Naive thymus-derived CD4-positive, alpha-beta T cell (primary cell): ENCODE measurements at regions of chr3 and their contacts with region 1.

Region 1: DNA sequence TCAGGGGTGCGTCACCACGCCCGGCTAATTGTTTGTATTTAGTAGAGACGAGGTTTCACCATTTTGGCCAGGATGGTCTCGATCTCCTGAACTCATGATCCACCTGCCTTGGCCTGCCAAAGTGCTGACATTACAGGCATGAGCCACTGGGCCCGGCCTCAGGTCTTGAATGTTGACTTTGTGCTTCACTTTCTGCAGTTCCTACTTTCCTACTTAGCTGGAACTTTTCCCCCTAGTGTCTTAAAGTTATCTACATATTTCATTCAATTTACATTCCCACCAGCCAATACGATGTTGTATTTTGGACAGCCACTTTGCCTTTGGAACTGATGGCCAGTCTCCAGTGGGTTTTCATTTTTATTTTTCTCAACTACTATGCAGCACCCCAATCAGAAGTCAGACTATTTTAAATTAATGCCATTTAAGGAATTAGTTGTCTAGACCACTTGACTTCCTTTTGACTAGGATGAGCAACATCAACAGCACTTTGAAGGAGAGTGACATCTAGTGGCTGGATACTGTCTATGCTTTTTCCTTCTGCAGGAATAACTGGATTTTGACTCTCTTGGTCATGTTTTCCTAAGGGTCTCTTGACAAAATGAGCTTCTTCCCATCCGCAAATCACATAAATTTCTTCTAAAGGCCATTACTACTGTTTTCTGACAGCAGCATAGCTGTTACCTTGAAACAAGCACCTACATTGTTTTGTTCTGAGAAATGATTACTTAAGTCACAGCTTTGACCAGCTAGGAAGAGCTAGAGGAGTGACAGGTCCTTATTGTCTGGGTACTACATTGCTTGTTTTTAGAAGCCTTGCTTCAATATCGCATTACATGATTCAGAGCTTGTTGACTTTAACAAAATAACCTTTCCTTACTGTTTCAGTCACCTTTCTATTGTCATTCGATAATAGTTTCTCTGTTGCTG is 140.2 kb downstream of the ITPR1 start:
- DNase-seq: peak in 6 of 9 donors; percentile 24 to 57 (median 44)
- ATAC-seq: peak; percentile 80
- H3K4me3 ChIP-seq: no peak overlapping the region
- H3K4me3 Mint-ChIP-seq: no peak overlapping the region
- H3K27ac ChIP-seq: no peak overlapping the region
- H3K27ac Mint-ChIP-seq: peak overlapping the region in 5 of 9 donors; percentile 1 to 53 (median 43)
- H3K4me1 ChIP-seq: no peaks in the 10 kb centered on the region
- H3K4me1 Mint-ChIP-seq: peaks cover 6 to 9% (median 7%) of the 10 kb centered on the region in 7 donors
- H3K27me3 ChIP-seq: no peaks in the 10 kb centered on the region
- H3K27me3 Mint-ChIP-seq: no peaks in the 10 kb centered on the region

Region 2: GRCh38 chr3:4290272-4290893 is 343.0 kb before region 1 on chr3:
- CTCF ChIA-PET with region 1: no interaction called
- POLR2A ChIA-PET with region 1: no interaction called
- intact Hi-C with region 1: loop called in 1 of 2 experiments (anchors 5 kb)
- DNase-seq: peak in 5 of 9 donors; percentile 31 to 47 (median 39)
- ATAC-seq: peak; percentile 84
- H3K4me3 ChIP-seq: no peak overlapping the region
- H3K4me3 Mint-ChIP-seq: no peak overlapping the region
- H3K27ac ChIP-seq: no peak overlapping the region
- H3K27ac Mint-ChIP-seq: peak overlapping the region in 2 of 9 donors; percentile 7 to 10
- H3K4me1 ChIP-seq: peaks cover 0 to 4% of the 10 kb centered on the region in 2 donors
- H3K4me1 Mint-ChIP-seq: peaks cover 2 to 34% (median 17%) of the 10 kb centered on the region in 7 donors
- H3K27me3 ChIP-seq: no peaks in the 10 kb centered on the region
- H3K27me3 Mint-ChIP-seq: peaks cover 0 to 27% (median 0%) of the 10 kb centered on the region in 5 donors

Region 3: GRCh38 chr3:4419920-4420319 is 213.4 kb before region 1 on chr3:
- CTCF ChIA-PET with region 1: no interaction called
- POLR2A ChIA-PET with region 1: no interaction called
- intact Hi-C with region 1: loop called in 1 of 2 experiments (anchors 1 kb)
- DNase-seq: no peak
- ATAC-seq: no peak
- H3K4me3 ChIP-seq: no peak overlapping the region
- H3K4me3 Mint-ChIP-seq: no peak overlapping the region
- H3K27ac ChIP-seq: no peak overlapping the region
- H3K27ac Mint-ChIP-seq: no peak overlapping the region
- H3K4me1 ChIP-seq: no peaks in the 10 kb centered on the region
- H3K4me1 Mint-ChIP-seq: peaks cover 0 to 3% (median 0%) of the 10 kb centered on the region in 7 donors
- H3K27me3 ChIP-seq: no peaks in the 10 kb centered on the region
- H3K27me3 Mint-ChIP-seq: no peaks in the 10 kb centered on the region

Region 4: DNA sequence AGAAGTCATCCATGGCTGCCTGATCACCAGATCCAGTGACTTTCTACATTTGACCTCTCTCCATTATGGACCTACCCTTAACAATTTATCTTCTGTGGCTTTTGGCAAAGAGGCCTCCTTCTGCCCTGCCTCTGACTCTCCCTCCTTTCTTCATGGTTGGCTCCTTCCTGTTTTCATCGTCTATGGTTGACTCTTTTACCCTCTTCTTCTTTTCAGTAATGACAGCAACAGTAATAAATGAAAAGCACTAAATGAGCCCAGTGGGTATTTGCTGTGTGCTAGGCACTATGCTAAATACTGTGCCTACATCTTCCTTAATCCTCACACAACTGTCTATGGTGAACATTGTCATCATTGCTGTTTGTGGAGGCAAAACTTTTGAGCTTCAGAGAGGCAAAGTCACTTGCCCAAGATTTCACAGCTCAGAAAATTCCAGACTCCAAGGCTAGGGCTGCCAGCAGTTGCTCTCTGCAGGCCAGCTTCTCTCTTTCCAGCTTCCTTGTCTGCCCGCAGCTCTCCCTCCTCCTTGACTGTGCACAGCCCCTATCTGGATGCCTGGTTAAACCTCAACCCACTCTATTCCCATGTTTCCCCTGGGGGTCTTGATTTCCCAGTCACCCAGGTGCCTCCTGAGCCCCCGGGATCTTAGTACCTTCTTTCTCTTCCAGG is 115.6 kb before region 1 on chr3:
- CTCF ChIA-PET with region 1: interaction called, 30 read pairs
- POLR2A ChIA-PET with region 1: interaction called, 3 read pairs
- intact Hi-C with region 1: loop called (anchors 1 to 5 kb)
- DNase-seq: no peak
- ATAC-seq: no peak
- H3K4me3 ChIP-seq: no peak overlapping the region
- H3K4me3 Mint-ChIP-seq: peak overlapping the region; percentile 2 to 79 (median 50)
- H3K27ac ChIP-seq: peak overlapping the region; percentile 40
- H3K27ac Mint-ChIP-seq: peak overlapping the region; percentile 24 to 95 (median 79)
- H3K4me1 ChIP-seq: peaks cover 14 to 24% of the 10 kb centered on the region in 2 donors
- H3K4me1 Mint-ChIP-seq: peaks cover 31 to 62% (median 50%) of the 10 kb centered on the region in 7 donors
- H3K27me3 ChIP-seq: no peaks in the 10 kb centered on the region
- H3K27me3 Mint-ChIP-seq: no peaks in the 10 kb centered on the region

Region 5: DNA sequence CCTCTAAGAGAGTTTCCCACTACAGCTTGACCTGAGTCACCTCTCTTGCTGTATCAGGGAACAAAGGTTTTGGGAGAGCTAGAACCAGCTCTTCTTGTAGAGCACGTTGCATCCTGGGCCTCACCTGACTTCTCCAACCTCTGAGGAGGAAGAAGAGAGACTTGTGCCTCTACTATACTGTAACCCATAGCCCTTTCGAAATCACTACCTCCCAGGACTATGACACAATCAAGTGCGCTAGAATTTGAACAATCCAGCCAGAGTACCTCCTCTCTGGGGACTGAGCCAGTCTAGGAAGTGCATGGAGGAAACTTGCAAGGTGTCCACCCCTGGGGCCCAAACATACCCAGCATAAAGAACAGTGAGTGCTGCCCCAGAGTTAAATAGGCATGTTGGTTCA is 153.1 kb after region 1 on chr3:
- CTCF ChIA-PET with region 1: no interaction called
- POLR2A ChIA-PET with region 1: no interaction called
- intact Hi-C with region 1: no loop called
- DNase-seq: no peak
- ATAC-seq: no peak
- H3K4me3 ChIP-seq: no peak overlapping the region
- H3K4me3 Mint-ChIP-seq: no peak overlapping the region
- H3K27ac ChIP-seq: no peak overlapping the region
- H3K27ac Mint-ChIP-seq: no peak overlapping the region
- H3K4me1 ChIP-seq: no peaks in the 10 kb centered on the region
- H3K4me1 Mint-ChIP-seq: peaks cover 0 to 16% (median 0%) of the 10 kb centered on the region in 7 donors
- H3K27me3 ChIP-seq: no peaks in the 10 kb centered on the region
- H3K27me3 Mint-ChIP-seq: no peaks in the 10 kb centered on the region